Head of caudate nucleus (tissue), 42 donors: ENCODE measurements at regions of chr18 and their contacts with region 1.

Region 1: GRCh38 chr18:12657684-12658425 is at the start of gene SPIRE1:
- DNase-seq: peak in 40 of 42 donors; percentile 51 to 88 (median 76)

Region 2: DNA sequence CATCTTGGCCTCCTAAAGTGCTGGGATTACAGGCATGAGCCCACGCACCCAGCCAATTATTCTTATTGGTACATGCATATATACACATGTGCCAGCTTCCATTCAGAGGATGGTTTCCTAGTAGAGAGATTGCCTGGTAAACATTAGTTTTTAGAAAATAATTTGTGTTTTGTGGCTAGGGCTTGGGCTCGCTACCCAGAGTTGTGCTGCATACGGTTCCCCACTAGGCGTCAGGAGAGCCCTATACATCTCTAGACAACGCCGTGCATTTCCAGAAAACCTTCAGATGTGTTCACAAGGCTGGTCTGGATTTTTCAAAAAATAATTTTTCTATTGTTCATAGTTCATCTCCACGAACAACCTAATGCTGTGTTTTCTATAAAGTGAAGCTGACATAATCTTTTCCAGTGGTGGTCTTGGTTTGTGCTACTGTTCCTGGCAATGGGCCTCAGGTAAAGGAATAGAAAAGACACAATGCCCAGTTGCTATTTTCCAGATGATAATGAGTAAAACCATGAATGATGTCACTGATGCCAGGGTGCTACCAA is 266.2 kb before region 1 on chr18:
- intact Hi-C with region 1: loop called (anchors 1 kb)
- DNase-seq: peak in 41 of 42 donors; percentile 25 to 89 (median 71)

Region 3: GRCh38 chr18:12408247-12408869 is 249.5 kb before region 1 on chr18:
- intact Hi-C with region 1: loop called (anchors 5 kb)
- DNase-seq: peak in 22 of 42 donors; percentile 8 to 59 (median 30)

Region 4: DNA sequence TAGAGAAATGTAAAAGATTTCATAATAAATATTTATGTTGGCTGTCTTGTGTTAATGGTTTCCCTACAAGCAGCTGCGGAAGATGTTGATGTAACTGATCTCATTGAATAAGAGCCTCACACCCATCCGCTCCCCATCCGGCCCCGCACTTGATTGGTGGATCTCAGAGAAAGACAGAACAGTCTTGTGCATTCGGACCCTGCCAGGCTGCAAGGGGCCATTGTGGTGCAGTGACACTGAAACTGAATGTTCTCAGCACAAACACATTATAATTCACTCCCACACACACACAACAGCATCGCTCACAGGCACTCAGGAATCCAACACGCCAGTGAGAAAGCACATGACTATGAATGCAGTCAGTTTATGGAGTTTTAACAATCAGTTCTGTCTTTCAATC is 202.4 kb before region 1 on chr18:
- intact Hi-C with region 1: loop called (anchors 5 kb)
- DNase-seq: peak; percentile 76 to 98 (median 92)

Region 5: GRCh38 chr18:12556946-12557806 is 100.7 kb before region 1 on chr18:
- intact Hi-C with region 1: no loop called
- DNase-seq: no peak

Region 6: DNA sequence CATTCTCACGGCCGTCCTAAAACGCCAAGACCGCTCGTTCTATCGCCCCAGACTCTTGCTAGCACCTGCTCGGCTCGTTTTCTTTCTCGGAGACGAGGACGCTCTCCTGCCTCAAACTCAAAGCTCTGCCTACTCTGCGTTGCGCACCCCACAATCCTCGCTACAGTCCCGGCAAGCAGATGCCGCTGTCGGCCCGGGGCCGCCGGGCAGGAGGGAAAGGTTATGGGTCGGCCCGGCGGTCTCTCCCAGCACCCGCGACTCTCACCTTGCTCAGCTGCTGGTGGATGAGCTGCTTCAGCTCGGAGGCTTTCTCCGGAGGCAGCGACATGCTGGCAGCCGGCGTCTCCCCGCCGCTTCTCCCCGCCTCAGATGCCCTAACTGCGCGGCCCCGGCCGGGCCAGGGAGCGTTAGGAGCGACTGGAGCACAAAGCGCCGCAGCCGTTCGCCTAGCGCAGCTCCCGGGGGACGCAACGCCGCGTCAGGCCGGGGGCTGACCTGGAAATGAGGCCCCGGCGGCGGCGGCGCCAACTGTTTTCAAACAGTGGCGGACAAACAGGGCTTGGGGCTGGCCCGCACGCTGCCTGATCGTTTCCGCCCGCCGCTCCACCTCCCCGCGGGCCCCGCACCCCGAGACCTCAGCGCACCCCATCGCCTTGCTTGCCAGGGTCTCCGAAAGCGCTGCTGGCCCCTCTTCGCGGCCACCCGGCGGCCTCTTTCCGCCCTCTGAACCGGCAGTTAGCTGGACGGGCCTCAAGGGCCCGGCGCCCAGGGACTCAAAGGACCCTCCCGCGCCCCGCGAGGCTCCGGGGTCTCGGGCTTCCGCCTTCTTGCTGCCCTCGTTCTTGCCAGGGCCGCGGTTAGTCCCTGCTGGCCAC is 44.6 kb after region 1 on chr18 and contains the starts of genes CEP76 and PSMG2:
- intact Hi-C with region 1: loop called (anchors 5 kb)
- DNase-seq: peak; percentile 70 to 95 (median 88)

Region 7: GRCh38 chr18:12904012-12904516 is 246.2 kb after region 1 on chr18:
- intact Hi-C with region 1: no loop called
- DNase-seq: no peak